ENCODE measurements at regions of chr2 and their contacts with region 1.

Region 1: GRCh38 chr2:24342110-24342910 is 18.0 kb downstream of the ITSN2 start:
- DNase-seq: no peak
- ATAC-seq: no peak
- H3K4me3 ChIP-seq: no peak overlapping the region
- H3K4me3 Mint-ChIP-seq: peak overlapping the region in 1 of 3 donors; percentile 2
- H3K27ac ChIP-seq: no peak overlapping the region
- H3K27ac Mint-ChIP-seq: peak overlapping the region in 1 of 2 donors; percentile 16
- H3K4me1 ChIP-seq: peaks cover 3 to 30% of the 10 kb centered on the region in 2 experiments
- H3K4me1 Mint-ChIP-seq: peaks cover 82 to 92% (median 89%) of the 10 kb centered on the region in 3 donors
- H3K27me3 ChIP-seq: no peaks in the 10 kb centered on the region
- H3K27me3 Mint-ChIP-seq: no peaks in the 10 kb centered on the region

Region 2: DNA sequence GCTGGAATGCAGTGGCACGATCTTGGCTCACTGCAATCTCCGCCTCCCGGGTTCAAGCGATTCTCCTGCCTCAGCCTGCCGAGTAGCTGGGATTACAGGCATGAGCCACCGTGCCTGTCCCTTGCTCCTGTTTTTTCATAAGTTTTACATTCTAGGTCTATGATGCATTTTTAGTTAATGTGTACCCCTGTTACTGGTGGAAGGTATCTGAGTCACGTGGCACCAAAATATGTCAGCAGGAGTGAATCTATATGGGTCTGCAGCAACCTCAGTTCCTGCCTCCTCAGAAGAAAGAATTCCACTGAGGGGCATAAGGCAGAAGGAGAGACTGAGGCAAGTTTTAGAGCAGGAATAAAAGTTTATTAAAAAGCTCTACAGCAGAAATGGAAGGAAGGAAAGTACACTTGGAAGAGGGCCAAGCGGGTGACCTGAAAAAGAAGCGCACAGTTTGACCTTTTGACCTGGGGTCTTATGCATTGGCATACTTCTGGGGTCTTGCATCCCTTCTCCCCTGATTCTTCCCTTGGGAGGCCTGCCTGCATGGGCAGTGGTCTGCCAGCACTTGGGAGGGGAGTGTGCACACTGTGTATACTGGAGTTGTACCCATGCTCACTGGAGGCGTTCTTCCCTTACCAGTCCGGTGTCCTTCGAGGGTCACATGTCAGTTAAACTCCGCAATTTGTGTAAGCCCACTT is 333.5 kb before region 1 on chr2:
- CTCF ChIA-PET with region 1: no interaction called
- POLR2A ChIA-PET with region 1: no interaction called
- DNase-seq: no peak
- ATAC-seq: no peak
- H3K4me3 ChIP-seq: no peak overlapping the region
- H3K4me3 Mint-ChIP-seq: no peak overlapping the region
- H3K27ac ChIP-seq: no peak overlapping the region
- H3K27ac Mint-ChIP-seq: no peak overlapping the region
- H3K4me1 ChIP-seq: peaks cover 2 to 15% of the 10 kb centered on the region in 2 experiments
- H3K4me1 Mint-ChIP-seq: peaks cover 0 to 9% (median 3%) of the 10 kb centered on the region in 3 donors
- H3K27me3 ChIP-seq: peaks cover 3 to 37% of the 10 kb centered on the region in 2 experiments
- H3K27me3 Mint-ChIP-seq: peaks cover 21 to 38% of the 10 kb centered on the region in 2 donors

Region 3: DNA sequence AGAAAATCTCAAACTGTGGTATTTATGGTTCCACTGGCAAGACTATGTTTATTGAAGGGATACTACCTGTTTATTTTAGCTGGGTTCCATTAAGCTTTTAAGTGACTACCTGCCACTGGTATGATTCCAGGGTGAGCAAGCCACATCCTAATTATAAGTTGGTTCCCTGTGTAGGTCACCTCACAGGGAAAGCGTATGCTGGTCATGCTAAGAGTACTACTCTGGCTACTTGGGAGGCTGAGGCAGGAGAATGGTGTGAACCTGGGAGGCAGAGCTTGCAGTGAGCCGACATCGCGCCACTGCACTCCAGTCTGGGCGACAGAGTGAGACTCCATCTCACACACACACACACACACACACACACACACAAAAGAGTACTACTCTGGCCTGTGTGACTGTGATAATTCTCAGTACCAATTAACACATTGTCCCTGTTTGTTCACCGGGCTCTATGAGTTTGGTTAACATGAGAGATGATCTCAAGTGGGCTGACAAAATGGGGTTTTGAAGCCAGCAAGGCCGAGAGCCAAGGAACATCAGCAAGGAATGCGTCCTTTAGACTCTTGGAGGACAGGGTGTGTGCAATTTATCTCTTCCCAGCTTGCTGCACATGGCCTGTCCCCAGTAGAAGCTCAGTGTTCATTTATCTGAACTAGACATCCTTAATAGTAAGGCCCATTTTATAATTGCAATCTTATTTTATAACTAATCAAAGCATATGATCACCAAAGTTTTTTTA is 33.2 kb after region 1 on chr2:
- CTCF ChIA-PET with region 1: interaction called in 1 of 2 experiments, 15 read pairs
- POLR2A ChIA-PET with region 1: no interaction called
- DNase-seq: no peak
- ATAC-seq: no peak
- H3K4me3 ChIP-seq: no peak overlapping the region
- H3K4me3 Mint-ChIP-seq: no peak overlapping the region
- H3K27ac ChIP-seq: no peak overlapping the region
- H3K27ac Mint-ChIP-seq: no peak overlapping the region
- H3K4me1 ChIP-seq: no peaks in the 10 kb centered on the region
- H3K4me1 Mint-ChIP-seq: no peaks in the 10 kb centered on the region
- H3K27me3 ChIP-seq: peaks cover 0 to 2% of the 10 kb centered on the region in 2 experiments
- H3K27me3 Mint-ChIP-seq: no peaks in the 10 kb centered on the region

Region 4: DNA sequence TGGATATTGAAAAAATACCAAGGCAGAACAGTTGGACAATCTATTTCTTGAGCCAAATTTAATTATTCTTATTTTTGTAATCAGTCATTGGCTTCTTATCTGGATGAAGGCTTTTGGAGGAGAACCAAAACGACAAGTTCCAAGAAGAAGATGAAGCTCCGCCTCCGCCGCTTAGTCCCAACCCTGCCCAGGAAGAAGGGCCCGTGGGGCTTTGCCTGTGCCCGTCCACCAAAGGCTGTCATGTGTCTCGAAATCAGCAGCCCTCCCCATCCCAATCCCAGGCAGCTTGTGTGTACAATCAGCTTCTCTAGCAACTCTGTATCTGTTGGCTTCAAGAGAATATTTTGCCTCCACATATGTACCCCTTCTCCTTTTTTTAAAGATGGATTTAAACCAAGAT is 426.3 kb after region 1 on chr2:
- CTCF ChIA-PET with region 1: interaction called in 1 of 2 experiments, 13 read pairs
- POLR2A ChIA-PET with region 1: no interaction called
- DNase-seq: no peak
- ATAC-seq: no peak
- H3K4me3 ChIP-seq: no peak overlapping the region
- H3K4me3 Mint-ChIP-seq: no peak overlapping the region
- H3K27ac ChIP-seq: no peak overlapping the region
- H3K27ac Mint-ChIP-seq: no peak overlapping the region
- H3K4me1 ChIP-seq: no peaks in the 10 kb centered on the region
- H3K4me1 Mint-ChIP-seq: peaks cover 0 to 2% (median 0%) of the 10 kb centered on the region in 3 donors
- H3K27me3 ChIP-seq: no peaks in the 10 kb centered on the region
- H3K27me3 Mint-ChIP-seq: no peaks in the 10 kb centered on the region

Measured in T-cell (primary cell).